Posterior vena cava (tissue), 2 donors: ENCODE measurements at regions of chr14 and their contacts with region 1.

Region 1: DNA sequence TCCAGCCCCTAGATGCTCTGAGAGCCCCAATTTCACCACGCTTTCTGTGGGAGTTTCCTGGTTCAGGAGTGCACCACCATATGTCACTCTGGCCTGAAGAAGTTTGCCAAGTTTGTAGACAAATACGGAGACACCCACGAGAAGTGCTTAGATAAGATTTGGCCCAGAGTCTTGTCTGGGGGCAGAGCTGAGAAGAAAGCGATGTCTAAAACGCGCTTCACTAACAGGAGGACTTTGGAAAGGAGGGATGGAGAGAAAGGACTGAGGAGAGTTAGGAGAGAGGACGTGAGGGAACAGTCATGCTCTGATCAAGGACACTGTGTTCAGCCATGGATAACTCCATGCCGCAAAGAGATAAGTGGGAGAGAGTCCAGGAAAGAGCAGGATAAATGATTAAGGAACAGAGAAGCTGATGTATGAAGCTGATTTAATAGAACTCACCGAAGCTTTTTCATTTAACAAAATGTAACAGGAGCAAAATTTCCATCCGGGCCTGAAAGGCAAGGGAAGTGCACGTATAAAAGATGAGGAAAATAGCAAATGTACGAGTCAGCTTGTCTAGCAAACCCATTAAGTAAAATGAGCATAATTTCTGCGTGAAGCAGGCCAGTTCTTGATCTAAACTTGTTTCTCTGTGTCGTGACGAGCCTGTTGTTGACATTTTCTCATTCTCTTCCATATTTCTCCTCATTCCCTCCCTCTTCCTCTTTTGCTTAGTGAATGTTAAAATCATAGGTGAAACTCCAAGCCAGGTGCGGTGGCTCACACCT is 23.4 kb upstream of the MAP3K9 start:
- DNase-seq: no peak

Region 2: GRCh38 chr14:70735043-70735442 is 97.7 kb before region 1 on chr14:
- intact Hi-C with region 1: no loop called
- DNase-seq: no peak

Region 3: DNA sequence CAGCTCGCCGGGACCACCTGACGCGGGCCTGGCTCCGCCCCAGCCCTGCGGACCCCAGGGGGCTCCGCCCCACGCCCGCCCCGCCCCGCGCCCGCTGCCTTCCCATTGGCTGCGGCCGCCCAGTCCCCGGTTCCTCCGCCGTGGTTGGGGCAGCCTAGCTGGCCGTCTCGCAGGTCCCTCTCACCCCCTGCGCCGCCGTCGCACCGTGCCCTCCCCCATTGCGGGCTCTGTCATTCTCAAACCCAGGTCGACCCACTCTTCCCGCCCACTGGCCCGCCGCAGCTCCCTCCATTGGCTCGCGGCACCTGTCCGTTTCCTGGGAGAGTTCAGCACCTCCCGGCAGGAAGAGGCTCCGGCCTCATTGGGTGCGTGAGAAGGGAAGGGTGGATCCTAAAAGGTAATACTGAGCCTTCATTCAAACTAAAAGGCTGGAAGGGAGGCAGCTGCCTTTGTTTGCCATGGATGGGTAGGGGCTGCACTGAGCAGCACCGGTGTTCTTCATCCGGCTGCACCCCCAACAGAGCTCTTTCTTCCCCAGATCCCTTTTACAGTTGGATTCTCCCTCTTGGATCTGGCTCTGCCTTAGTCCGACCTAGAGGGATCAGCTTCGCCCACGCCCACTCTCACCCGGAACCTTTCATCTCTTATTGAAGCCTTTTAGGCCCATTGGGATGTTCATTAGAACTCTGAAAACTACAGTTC is 23.0 kb before region 1 on chr14:
- intact Hi-C with region 1: loop called in 1 of 2 experiments (anchors 1 kb)
- DNase-seq: peak; percentile 89